Activated CD8-positive, alpha-beta T cell treated with anti-CD3 and anti-CD28 coated beads, Interleukin-2, amount 10 ng/mL, durations not matched to agents 7 days and 5 days (primary cell): ENCODE measurements at regions of chr7 and their contacts with region 1.

Region 1: GRCh38 chr7:142557971-142558582 is 191.2 kb upstream of the PRSS1 start:
- DNase-seq: peak; percentile 65
- ATAC-seq: peak; percentile 83
- H3K4me3 Mint-ChIP-seq: peak overlapping the region; percentile 4
- H3K27ac Mint-ChIP-seq: no peak overlapping the region
- H3K4me1 Mint-ChIP-seq: peaks cover 15% of the 10 kb centered on the region
- H3K27me3 Mint-ChIP-seq: peaks cover 9% of the 10 kb centered on the region

Region 2: DNA sequence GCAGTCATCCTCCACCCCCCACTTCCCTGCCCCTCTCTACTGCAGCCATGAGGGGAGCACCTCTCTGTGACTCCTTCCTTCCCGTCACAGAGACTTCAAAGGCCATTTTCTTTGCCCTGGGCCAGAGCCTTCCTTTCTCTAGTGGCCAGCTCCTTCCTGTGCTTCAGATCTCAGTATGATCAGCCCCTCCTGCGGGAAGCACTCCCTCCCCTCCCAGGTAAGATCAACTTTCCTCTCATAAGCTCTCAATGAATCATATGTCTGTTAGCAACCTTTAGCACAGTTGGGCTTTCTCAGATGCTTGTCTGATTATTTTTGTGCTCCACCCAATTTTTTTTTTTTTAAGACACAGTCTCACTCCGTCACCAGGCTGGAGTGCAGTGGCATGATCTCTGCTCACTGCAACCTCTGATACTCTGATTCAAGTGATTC is 49.8 kb before region 1 on chr7:
- CTCF ChIA-PET with region 1: no interaction called
- POLR2A ChIA-PET with region 1: no interaction called
- DNase-seq: no peak
- ATAC-seq: peak; percentile 71
- H3K4me3 Mint-ChIP-seq: no peak overlapping the region
- H3K27ac Mint-ChIP-seq: peak overlapping the region; percentile 68
- H3K4me1 Mint-ChIP-seq: peaks cover 30% of the 10 kb centered on the region
- H3K27me3 Mint-ChIP-seq: peaks cover 8% of the 10 kb centered on the region

Region 3: DNA sequence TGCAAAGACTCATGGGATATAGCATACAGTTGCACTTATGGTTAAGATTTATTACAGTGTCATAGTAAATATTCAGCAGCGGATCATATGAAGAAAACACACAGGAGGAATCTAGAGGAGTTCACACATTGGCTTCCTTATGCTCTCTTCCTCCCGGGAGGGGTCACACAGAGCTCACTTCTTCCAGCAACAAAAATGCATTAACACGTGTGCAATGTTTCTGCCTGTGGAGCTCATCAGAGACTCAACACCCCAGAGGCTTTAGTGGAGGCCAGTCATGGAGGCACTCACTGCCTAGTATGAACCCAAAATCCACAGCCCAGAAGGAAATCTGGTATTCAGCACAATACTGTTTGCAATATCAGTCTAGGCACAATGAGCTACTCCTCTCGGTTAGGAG is 11.6 kb before region 1 on chr7:
- CTCF ChIA-PET with region 1: interaction called, 17 read pairs
- POLR2A ChIA-PET with region 1: no interaction called
- DNase-seq: no peak
- ATAC-seq: no peak
- H3K4me3 Mint-ChIP-seq: no peak overlapping the region
- H3K27ac Mint-ChIP-seq: no peak overlapping the region
- H3K4me1 Mint-ChIP-seq: no peaks in the 10 kb centered on the region
- H3K27me3 Mint-ChIP-seq: peaks cover 10% of the 10 kb centered on the region

Region 4: DNA sequence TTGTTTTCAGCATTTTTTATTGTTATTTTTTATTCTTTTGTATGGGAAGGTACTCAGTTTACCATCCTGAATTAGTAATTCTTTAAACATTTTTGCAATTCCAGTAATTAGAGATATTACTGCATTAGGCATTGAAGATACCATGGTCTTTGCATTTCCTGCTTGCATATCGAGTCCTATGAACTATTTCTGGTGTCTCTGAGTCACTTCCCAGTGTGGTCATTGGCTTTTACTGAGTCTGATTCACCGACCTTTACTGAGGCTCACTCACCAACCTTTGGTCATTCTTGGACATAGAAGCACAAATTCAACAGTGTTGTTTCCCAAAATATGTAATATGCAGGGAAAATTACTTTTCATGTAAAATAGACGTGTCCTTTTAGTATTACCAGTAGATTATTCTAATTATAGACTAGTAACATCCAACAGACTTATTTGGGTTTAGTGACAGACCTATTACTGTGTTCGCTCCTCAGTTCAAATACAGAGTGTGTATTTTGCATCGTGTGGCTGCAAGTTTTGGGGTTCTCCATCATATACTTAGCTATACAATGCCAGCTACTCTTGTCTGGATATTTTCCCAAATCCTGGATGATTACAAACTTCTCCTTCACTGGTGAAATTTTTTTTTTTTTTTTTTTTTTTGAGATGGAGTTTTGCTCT is 10.5 kb after region 1 on chr7:
- CTCF ChIA-PET with region 1: interaction called, 10 read pairs
- POLR2A ChIA-PET with region 1: no interaction called
- DNase-seq: no peak
- ATAC-seq: no peak
- H3K4me3 Mint-ChIP-seq: no peak overlapping the region
- H3K27ac Mint-ChIP-seq: no peak overlapping the region
- H3K4me1 Mint-ChIP-seq: peaks cover 10% of the 10 kb centered on the region
- H3K27me3 Mint-ChIP-seq: peaks cover 5% of the 10 kb centered on the region

Region 5: DNA sequence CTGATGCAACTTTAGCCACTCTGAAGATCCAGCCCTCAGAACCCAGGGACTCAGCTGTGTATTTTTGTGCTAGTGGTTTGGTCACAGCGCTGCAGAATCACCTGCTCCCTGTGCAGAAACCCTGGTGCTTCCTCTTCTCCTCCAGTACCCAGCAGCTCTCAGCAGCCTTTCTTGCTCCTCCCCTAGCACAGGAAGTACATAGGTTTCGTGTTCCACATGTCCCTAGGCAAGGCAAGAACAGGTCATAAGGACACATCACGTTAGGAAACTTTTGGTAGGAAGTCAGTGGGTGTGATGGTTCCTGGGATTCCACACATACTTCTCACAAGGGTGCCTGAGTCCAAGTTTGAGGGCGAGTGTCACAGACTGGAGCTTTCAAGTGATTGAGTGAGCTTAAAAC is 23.3 kb after region 1 on chr7:
- CTCF ChIA-PET with region 1: interaction called, 24 read pairs
- POLR2A ChIA-PET with region 1: no interaction called
- DNase-seq: peak; percentile 57
- ATAC-seq: peak; percentile 88
- H3K4me3 Mint-ChIP-seq: peak overlapping the region; percentile 58
- H3K27ac Mint-ChIP-seq: peak overlapping the region; percentile 75
- H3K4me1 Mint-ChIP-seq: peaks cover 28% of the 10 kb centered on the region
- H3K27me3 Mint-ChIP-seq: no peaks in the 10 kb centered on the region

Region 6: GRCh38 chr7:142587578-142588191 is 29.6 kb after region 1 on chr7:
- CTCF ChIA-PET with region 1: interaction called, 30 read pairs
- POLR2A ChIA-PET with region 1: interaction called, 3 read pairs
- DNase-seq: peak; percentile 43
- ATAC-seq: peak; percentile 89
- H3K4me3 Mint-ChIP-seq: peak overlapping the region; percentile 17
- H3K27ac Mint-ChIP-seq: no peak overlapping the region
- H3K4me1 Mint-ChIP-seq: no peaks in the 10 kb centered on the region
- H3K27me3 Mint-ChIP-seq: no peaks in the 10 kb centered on the region

Region 7: GRCh38 chr7:142598297-142598696 is 40.2 kb after region 1 on chr7:
- CTCF ChIA-PET with region 1: interaction called, 11 read pairs
- POLR2A ChIA-PET with region 1: no interaction called
- DNase-seq: no peak
- ATAC-seq: no peak
- H3K4me3 Mint-ChIP-seq: no peak overlapping the region
- H3K27ac Mint-ChIP-seq: no peak overlapping the region
- H3K4me1 Mint-ChIP-seq: no peaks in the 10 kb centered on the region
- H3K27me3 Mint-ChIP-seq: peaks cover 14% of the 10 kb centered on the region